ENCODE measurements at regions of chr4 and their contacts with region 1.

Region 1: DNA sequence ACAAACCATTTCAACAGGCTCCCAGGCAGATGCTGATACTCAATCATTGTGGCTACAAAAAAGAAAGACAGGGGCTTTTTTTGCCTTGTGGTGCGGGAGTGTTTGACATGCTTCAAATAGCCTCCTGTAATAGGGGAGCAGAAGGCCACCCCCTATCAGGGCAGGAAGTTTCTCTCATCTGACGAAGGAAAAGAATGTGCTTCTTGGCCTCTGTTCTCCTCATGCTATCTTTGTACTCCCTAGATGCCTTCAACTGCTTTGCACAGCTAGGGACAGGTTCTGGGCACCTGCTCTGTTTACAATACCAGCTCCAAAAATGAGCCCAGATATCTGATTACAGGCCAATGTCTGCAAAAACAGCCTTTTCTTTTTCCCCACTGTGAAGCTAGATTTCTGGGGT is 391.1 kb downstream of the STIM2 start:
- DNase-seq: no peak
- H3K4me3 ChIP-seq: no peak overlapping the region
- H3K27ac ChIP-seq: no peak overlapping the region
- H3K4me1 ChIP-seq: no peaks in the 10 kb centered on the region
- H3K27me3 ChIP-seq: no peaks in the 10 kb centered on the region
- CTCF ChIP-seq: no peak

Region 2: DNA sequence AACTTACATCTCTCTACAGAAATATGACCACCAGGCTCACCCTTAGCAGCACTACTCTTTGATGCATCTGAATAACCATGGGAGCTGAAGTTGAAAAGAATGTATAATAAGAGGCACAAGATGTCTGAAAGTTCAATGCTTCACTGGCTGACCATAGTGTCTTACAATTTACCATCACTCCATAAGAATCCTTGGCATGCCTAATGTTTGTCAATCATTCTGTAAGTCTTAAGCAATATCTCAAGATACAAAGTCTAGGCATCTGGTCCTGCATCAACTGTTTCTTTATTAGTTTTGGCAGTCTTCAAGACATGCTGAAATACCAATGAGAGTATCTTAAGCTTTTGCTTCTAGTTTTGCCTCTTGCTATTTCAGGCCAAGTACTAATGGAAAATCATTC is 364.4 kb after region 1 on chr4:
- intact Hi-C with region 1: loop called (anchors 5 kb)
- DNase-seq: no peak
- H3K4me3 ChIP-seq: no peak overlapping the region
- H3K27ac ChIP-seq: no peak overlapping the region
- H3K4me1 ChIP-seq: no peaks in the 10 kb centered on the region
- H3K27me3 ChIP-seq: no peaks in the 10 kb centered on the region
- CTCF ChIP-seq: no peak

Region 3: DNA sequence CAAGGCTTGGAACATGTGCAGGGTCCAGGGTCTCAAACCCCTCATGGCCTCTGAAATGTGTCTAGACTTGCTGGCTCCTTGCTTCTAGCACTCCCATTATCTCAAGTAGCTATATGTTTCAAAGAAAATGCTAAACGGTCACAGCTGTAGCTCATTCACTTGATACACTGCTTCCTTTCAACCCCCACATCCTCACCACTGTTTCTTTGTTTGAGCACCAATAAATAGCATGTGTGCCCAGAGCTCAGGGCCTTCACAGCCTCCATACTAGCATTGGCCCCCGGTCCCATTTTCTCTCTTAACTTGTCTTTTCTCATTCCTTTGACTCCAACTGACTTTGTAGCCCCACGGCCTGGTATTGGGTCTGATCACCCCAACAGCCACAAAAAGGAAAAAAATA is 410.7 kb after region 1 on chr4:
- intact Hi-C with region 1: no loop called
- DNase-seq: no peak
- H3K4me3 ChIP-seq: no peak overlapping the region
- H3K27ac ChIP-seq: no peak overlapping the region
- H3K4me1 ChIP-seq: no peaks in the 10 kb centered on the region
- H3K27me3 ChIP-seq: no peaks in the 10 kb centered on the region
- CTCF ChIP-seq: no peak